ENCODE measurements at regions of chr12 and their contacts with region 1.

Region 1: GRCh38 chr12:810671-811415 is 58.5 kb downstream of the WNK1 start:
- DNase-seq: no peak
- ATAC-seq: no peak
- H3K4me3 ChIP-seq: no peak overlapping the region
- H3K4me3 Mint-ChIP-seq: peak overlapping the region in 1 of 3 donors; percentile 14
- H3K27ac ChIP-seq: no peak overlapping the region
- H3K27ac Mint-ChIP-seq: peak overlapping the region; percentile 63 to 84
- H3K4me1 ChIP-seq: peaks cover 27 to 35% of the 10 kb centered on the region in 2 experiments
- H3K4me1 Mint-ChIP-seq: peaks cover 69 to 72% (median 69%) of the 10 kb centered on the region in 3 donors
- H3K27me3 ChIP-seq: no peaks in the 10 kb centered on the region
- H3K27me3 Mint-ChIP-seq: no peaks in the 10 kb centered on the region

Region 2: GRCh38 chr12:575948-576612 is 234.8 kb before region 1 on chr12:
- CTCF ChIA-PET with region 1: interaction called, 10 to 40 read pairs
- POLR2A ChIA-PET with region 1: no interaction called
- DNase-seq: peak; percentile 47 to 91 (median 76)
- ATAC-seq: peak; percentile 98
- H3K4me3 ChIP-seq: peak overlapping the region in 1 of 2 donors; percentile 28
- H3K4me3 Mint-ChIP-seq: peak overlapping the region; percentile 51 to 56 (median 53)
- H3K27ac ChIP-seq: no peak overlapping the region
- H3K27ac Mint-ChIP-seq: peak overlapping the region in 1 of 2 donors; percentile 72
- H3K4me1 ChIP-seq: peaks cover 0 to 16% of the 10 kb centered on the region in 2 experiments
- H3K4me1 Mint-ChIP-seq: peaks cover 13 to 30% (median 21%) of the 10 kb centered on the region in 3 donors
- H3K27me3 ChIP-seq: no peaks in the 10 kb centered on the region
- H3K27me3 Mint-ChIP-seq: no peaks in the 10 kb centered on the region

Region 3: GRCh38 chr12:593396-594270 is 217.2 kb before region 1 on chr12:
- CTCF ChIA-PET with region 1: no interaction called
- POLR2A ChIA-PET with region 1: no interaction called
- DNase-seq: no peak
- ATAC-seq: no peak
- H3K4me3 ChIP-seq: no peak overlapping the region
- H3K4me3 Mint-ChIP-seq: no peak overlapping the region
- H3K27ac ChIP-seq: no peak overlapping the region
- H3K27ac Mint-ChIP-seq: no peak overlapping the region
- H3K4me1 ChIP-seq: no peaks in the 10 kb centered on the region
- H3K4me1 Mint-ChIP-seq: no peaks in the 10 kb centered on the region
- H3K27me3 ChIP-seq: peaks cover 0 to 3% of the 10 kb centered on the region in 2 experiments
- H3K27me3 Mint-ChIP-seq: no peaks in the 10 kb centered on the region

Region 4: DNA sequence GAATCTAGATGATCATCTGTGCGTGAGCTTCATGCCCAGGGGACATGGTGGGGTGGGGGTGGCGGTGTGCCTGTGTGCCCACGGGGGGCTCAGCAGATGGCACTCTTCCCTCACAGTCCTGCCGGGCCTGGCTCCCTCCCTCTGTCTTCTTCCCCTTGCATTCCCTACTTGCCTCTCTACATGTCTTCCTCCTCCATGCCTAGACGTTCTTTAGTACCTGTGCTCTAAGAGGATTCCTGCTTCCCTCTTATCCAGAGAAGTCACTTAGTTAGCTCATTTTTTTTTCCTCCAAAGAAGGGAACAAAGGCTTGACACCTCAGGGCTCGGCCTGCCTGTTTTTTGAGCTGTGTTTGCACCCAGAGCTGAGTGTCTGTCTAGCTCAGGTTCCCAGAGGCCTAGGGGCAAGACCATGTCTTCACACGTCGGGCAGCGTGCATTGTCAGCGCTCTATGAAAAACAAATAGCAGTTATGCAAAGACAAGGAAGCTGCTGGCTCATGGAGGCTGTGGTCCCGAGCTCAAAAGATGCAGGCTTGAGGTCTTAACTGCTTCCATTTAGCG is 196.4 kb before region 1 on chr12:
- CTCF ChIA-PET with region 1: interaction called, 10 to 19 read pairs
- POLR2A ChIA-PET with region 1: interaction called in 1 of 2 experiments, 5 read pairs
- DNase-seq: peak in 18 of 35 experiments; percentile 11 to 55 (median 22)
- ATAC-seq: peak; percentile 48 to 81 (median 58)
- H3K4me3 ChIP-seq: no peak overlapping the region
- H3K4me3 Mint-ChIP-seq: no peak overlapping the region
- H3K27ac ChIP-seq: no peak overlapping the region
- H3K27ac Mint-ChIP-seq: no peak overlapping the region
- H3K4me1 ChIP-seq: peaks cover 17 to 21% of the 10 kb centered on the region in 2 experiments
- H3K4me1 Mint-ChIP-seq: peaks cover 21 to 35% (median 32%) of the 10 kb centered on the region in 3 donors
- H3K27me3 ChIP-seq: no peaks in the 10 kb centered on the region
- H3K27me3 Mint-ChIP-seq: no peaks in the 10 kb centered on the region

Region 5: DNA sequence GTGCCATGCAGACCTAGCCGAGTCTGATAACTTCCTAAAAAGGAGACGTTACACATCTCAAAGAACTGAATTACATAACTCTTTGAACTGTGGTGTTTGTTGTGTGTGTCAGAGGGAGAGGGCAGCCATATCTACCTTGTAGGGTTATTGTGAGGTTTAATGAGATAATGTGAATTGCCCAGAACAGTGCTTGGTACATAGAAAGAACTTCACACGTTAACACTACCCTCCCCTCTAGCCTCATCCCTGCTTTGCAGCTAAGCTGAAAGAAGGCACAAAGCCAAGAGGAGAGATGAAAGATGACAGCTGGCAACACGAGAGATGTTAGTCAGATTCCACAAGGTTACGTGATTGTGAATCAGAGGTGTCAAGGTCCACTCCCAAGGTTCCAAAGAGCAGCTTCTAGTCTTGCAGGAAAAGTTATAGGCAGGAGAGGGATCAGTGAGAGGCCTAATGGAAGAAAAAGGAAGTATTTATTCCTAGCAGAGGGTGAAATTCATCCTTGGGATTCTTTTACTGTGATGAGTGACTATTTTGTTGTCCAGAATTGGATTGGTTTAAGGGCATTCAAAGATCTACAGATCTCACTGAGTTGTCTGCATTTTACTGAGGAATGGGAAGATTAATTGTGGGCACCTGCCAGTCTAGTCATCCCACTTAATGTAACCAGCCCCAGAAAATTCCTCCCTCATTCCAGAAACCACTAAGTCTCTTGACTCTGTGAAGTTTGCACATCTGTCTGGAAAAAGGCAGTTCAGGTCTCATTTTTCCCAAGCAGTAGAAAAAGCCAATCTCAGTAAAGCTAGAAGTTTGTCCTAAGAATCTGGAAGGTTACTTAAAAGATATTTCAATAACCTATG is 84.3 kb before region 1 on chr12:
- CTCF ChIA-PET with region 1: interaction called, 3 to 14 read pairs
- POLR2A ChIA-PET with region 1: no interaction called
- DNase-seq: peak in 8 of 35 experiments; percentile 2 to 33 (median 12)
- ATAC-seq: peak in 3 of 4 experiments; percentile 28 to 65 (median 34)
- H3K4me3 ChIP-seq: no peak overlapping the region
- H3K4me3 Mint-ChIP-seq: peak overlapping the region in 1 of 3 donors; percentile 48
- H3K27ac ChIP-seq: peak overlapping the region; percentile 15
- H3K27ac Mint-ChIP-seq: peak overlapping the region; percentile 78 to 86
- H3K4me1 ChIP-seq: peaks cover 31 to 65% of the 10 kb centered on the region in 2 experiments
- H3K4me1 Mint-ChIP-seq: peaks cover 78 to 91% (median 82%) of the 10 kb centered on the region in 3 donors
- H3K27me3 ChIP-seq: no peaks in the 10 kb centered on the region
- H3K27me3 Mint-ChIP-seq: no peaks in the 10 kb centered on the region

Region 6: DNA sequence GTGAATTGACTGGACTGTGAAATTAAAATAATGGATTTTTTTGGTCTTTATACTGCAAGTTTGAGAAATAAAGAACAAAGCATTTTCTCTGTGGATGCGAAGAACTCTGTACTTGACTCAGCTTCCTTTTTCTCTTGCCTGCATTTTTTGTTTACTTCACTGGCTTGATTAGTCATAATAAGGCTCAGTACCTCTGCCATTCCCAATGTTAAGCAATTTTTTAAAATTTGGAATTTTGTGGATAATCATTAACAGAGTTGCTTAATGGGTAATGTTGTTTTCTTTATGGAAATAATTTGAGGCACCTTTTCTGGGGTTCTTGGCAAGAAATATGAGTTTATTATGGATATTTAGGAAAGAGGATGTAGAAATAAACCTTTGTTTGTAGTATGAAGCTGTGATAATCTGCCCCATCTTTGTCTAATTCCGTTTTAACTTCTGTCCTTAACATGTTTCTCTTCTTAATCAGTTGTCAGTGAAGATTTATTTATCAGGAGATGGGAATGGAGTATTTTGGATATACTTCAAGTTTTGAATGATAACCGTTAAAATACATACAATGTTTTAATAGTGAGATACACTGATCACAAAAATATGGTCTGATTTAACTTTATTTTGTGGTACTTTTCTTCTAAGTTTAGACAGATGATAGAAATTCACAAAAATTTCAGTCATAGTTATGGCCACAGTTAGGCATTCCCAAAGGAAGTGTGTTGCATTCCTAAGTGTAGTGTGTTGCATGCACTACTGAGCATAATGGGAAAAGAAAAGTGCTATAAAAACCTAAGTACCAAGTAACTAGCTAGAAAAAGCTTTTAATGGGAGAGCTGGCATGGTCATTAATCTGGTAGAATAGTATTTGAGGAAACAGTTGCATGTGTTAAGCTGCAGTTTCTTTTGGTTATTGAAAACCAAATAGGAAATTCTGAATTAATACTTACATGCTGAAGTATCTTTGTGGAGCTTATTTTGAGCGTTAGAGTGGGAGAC is 30.8 kb before region 1 on chr12:
- CTCF ChIA-PET with region 1: interaction called, 3 to 10 read pairs
- POLR2A ChIA-PET with region 1: interaction called in 1 of 2 experiments, 3 read pairs
- DNase-seq: no peak
- ATAC-seq: peak; percentile 34 to 68 (median 59)
- H3K4me3 ChIP-seq: no peak overlapping the region
- H3K4me3 Mint-ChIP-seq: peak overlapping the region; percentile 76 to 80 (median 79)
- H3K27ac ChIP-seq: no peak overlapping the region
- H3K27ac Mint-ChIP-seq: peak overlapping the region; percentile 21 to 71
- H3K4me1 ChIP-seq: peaks cover 25 to 31% of the 10 kb centered on the region in 2 experiments
- H3K4me1 Mint-ChIP-seq: peaks cover 76 to 80% (median 77%) of the 10 kb centered on the region in 3 donors
- H3K27me3 ChIP-seq: no peaks in the 10 kb centered on the region
- H3K27me3 Mint-ChIP-seq: no peaks in the 10 kb centered on the region

Region 7: GRCh38 chr12:795305-795704 is 15.5 kb before region 1 on chr12:
- CTCF ChIA-PET with region 1: interaction called, 3 to 8 read pairs
- POLR2A ChIA-PET with region 1: interaction called in 1 of 2 experiments, 12 read pairs
- DNase-seq: peak in 5 of 35 experiments; percentile 4 to 43 (median 23)
- ATAC-seq: peak; percentile 49 to 74 (median 58)
- H3K4me3 ChIP-seq: no peak overlapping the region
- H3K4me3 Mint-ChIP-seq: peak overlapping the region; percentile 1 to 29 (median 22)
- H3K27ac ChIP-seq: no peak overlapping the region
- H3K27ac Mint-ChIP-seq: peak overlapping the region; percentile 80 to 83
- H3K4me1 ChIP-seq: peaks cover 20 to 24% of the 10 kb centered on the region in 2 experiments
- H3K4me1 Mint-ChIP-seq: peaks cover 78 to 84% (median 79%) of the 10 kb centered on the region in 3 donors
- H3K27me3 ChIP-seq: no peaks in the 10 kb centered on the region
- H3K27me3 Mint-ChIP-seq: no peaks in the 10 kb centered on the region

Region 8: DNA sequence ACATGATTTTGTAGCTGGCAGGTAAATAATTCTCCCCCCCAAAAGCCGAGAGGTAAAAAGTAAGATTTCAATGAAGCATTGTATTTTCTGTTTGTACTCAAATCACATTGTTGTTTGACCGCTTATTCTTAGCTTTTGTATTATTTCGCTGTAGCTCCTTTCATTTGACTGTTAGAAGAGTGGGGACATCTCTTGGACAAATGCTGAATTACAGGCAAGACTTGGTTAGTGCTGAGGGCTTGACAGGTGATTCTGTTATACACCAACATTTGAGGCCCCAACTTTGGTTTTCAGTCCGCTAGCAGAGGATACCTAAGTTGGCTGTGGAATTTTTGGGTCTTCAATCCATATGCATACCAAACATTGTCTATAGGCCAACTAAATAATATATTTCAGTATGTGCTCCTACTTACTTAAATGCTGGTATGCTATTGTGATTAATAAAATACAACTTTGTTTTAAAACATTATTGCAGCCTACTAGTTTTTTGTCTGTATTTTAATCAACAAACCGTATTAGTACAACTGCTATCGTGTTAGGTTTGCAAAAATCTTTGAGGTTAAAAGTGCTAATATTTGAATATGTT is 282.4 kb after region 1 on chr12:
- CTCF ChIA-PET with region 1: interaction called in 1 of 2 experiments, 13 read pairs
- POLR2A ChIA-PET with region 1: no interaction called
- DNase-seq: peak in 17 of 35 experiments; percentile 3 to 66 (median 19)
- ATAC-seq: peak in 3 of 4 experiments; percentile 44 to 69 (median 63)
- H3K4me3 ChIP-seq: no peak overlapping the region
- H3K4me3 Mint-ChIP-seq: no peak overlapping the region
- H3K27ac ChIP-seq: no peak overlapping the region
- H3K27ac Mint-ChIP-seq: no peak overlapping the region
- H3K4me1 ChIP-seq: no peaks in the 10 kb centered on the region
- H3K4me1 Mint-ChIP-seq: peaks cover 3 to 16% (median 12%) of the 10 kb centered on the region in 3 donors
- H3K27me3 ChIP-seq: no peaks in the 10 kb centered on the region
- H3K27me3 Mint-ChIP-seq: no peaks in the 10 kb centered on the region

Region 9: DNA sequence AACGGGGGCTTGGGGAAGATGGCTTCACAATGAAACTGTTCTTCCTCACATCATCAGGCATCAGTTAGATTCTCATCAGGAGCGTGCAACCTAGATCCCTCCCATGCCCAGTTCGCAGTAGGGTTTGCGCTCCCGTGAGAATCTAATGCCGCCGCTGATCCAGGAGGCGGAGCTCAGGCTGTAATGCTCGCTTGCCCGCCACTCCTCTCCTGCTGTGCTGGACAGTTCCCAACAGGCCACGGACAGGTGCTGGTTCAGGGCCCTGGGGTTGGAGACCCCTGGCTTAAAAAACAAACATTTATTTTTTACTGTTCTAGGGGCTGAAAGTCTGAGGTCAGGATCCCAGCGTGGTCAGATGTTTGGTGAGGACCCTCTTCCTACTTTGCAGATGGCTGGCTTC is 603.1 kb after region 1 on chr12:
- CTCF ChIA-PET with region 1: no interaction called
- POLR2A ChIA-PET with region 1: no interaction called
- DNase-seq: no peak
- ATAC-seq: no peak
- H3K4me3 ChIP-seq: no peak overlapping the region
- H3K4me3 Mint-ChIP-seq: no peak overlapping the region
- H3K27ac ChIP-seq: no peak overlapping the region
- H3K27ac Mint-ChIP-seq: no peak overlapping the region
- H3K4me1 ChIP-seq: no peaks in the 10 kb centered on the region
- H3K4me1 Mint-ChIP-seq: no peaks in the 10 kb centered on the region
- H3K27me3 ChIP-seq: no peaks in the 10 kb centered on the region
- H3K27me3 Mint-ChIP-seq: no peaks in the 10 kb centered on the region